Kidney (tissue), 22 donors: ENCODE measurements at regions of chr5 and their contacts with region 1.

Region 1: DNA sequence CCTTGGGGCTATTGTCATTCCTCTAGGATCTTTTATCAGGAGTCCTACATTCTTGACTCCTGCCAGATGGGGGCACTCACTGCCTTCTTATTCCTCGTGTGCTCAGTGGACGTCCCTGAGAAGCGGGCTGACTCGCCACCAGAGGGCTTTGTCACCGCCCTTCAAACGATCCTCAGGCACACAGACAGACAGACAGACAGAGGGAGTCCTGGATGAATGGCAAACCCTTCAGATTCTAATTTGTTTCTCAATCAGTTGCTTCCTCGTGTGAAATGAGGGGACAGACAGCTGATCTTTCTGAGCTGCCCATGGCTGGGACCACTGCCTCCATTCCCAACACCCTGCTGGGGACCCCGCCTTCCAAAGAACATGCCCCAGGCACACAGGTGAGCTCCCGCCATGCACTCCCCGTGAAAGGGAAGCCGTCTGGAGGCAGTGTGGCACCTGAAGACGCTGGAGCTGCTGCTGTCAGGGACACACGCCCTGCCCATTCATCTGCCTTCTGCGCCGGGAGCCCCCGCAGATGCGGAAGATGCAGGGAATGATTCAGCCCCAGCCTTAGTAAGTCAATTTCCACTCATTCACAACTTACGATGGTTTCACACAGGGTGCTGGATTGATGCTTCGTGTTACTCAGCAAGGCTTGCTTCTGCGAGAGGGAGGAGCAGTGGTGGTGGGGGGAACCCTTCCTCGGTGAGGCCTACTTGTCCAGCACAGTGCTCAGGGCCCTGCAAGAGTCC is 24.9 kb upstream of the SH3PXD2B start:
- DNase-seq: peak; percentile 83 to 97 (median 92)
- H3K4me3 ChIP-seq: no peak overlapping the region
- H3K27ac ChIP-seq: no peak overlapping the region
- H3K4me1 ChIP-seq: peaks cover 0 to 4% (median 0%) of the 10 kb centered on the region in 3 donors
- H3K27me3 ChIP-seq: no peaks in the 10 kb centered on the region
- CTCF ChIP-seq: peak; percentile 95

Region 2: GRCh38 chr5:172697123-172698121 is 218.2 kb after region 1 on chr5:
- intact Hi-C with region 1: loop called (anchors 5 kb)
- DNase-seq: peak; percentile 93 to 96 (median 93)
- H3K4me3 ChIP-seq: peak overlapping the region; percentile 44 to 91 (median 79)
- H3K27ac ChIP-seq: peak overlapping the region; percentile 57 to 79
- H3K4me1 ChIP-seq: peaks cover 3 to 24% (median 7%) of the 10 kb centered on the region in 3 donors
- H3K27me3 ChIP-seq: no peaks in the 10 kb centered on the region
- CTCF ChIP-seq: peak; percentile 97

Region 3: DNA sequence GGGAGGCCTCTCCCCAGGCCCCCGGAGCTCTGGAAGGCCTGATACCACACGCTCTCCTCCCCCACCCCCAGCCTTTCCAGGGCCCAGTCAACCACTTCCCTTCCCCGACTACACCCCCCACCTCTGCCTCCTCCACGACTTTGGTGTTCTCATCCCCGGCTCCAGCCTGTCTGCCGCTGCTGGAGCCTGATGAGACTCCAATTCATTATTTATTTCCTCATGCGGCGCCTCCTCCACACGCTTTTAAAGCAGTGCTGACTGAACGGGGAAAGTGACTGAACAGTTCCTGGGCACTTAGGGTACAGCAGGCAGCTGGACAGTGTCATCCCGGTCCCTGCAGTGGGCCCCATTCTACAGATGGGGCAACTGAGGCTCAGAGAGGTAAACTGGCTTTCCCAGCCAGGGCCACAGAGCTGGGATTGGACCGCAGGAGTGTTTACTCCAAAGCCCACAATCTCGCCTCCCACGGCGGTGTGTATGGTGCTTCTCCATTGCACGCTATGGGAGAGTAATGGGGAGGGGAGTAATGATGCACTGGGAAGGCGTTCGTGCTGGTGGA is 464.1 kb after region 1 on chr5:
- intact Hi-C with region 1: loop called (anchors 10 kb)
- DNase-seq: peak; percentile 51 to 93 (median 91)
- H3K4me3 ChIP-seq: no peak overlapping the region
- H3K27ac ChIP-seq: no peak overlapping the region
- H3K4me1 ChIP-seq: peaks cover 0 to 4% (median 0%) of the 10 kb centered on the region in 3 donors
- H3K27me3 ChIP-seq: no peaks in the 10 kb centered on the region
- CTCF ChIP-seq: no peak